ENCODE measurements at regions of chr3 and their contacts with region 1.

Region 1: GRCh38 chr3:25493786-25494185 is 65.7 kb downstream of the RARB start:
- DNase-seq: no peak
- H3K4me3 ChIP-seq: no peak overlapping the region
- H3K27ac ChIP-seq: no peak overlapping the region
- H3K4me1 ChIP-seq: no peaks in the 10 kb centered on the region
- H3K27me3 ChIP-seq: no peaks in the 10 kb centered on the region
- CTCF ChIP-seq: no peak
- POLR2A ChIP-seq: no peak

Region 2: GRCh38 chr3:24343084-24343783 is 1150.6 kb before region 1 on chr3:
- intact Hi-C with region 1: no loop called
- DNase-seq: no peak
- H3K4me3 ChIP-seq: no peak overlapping the region
- H3K27ac ChIP-seq: no peak overlapping the region
- H3K4me1 ChIP-seq: peaks cover 3 to 6% of the 10 kb centered on the region in 2 donors
- H3K27me3 ChIP-seq: no peaks in the 10 kb centered on the region
- CTCF ChIP-seq: no peak
- POLR2A ChIP-seq: no peak

Region 3: GRCh38 chr3:25531971-25532370 is 38.2 kb after region 1 on chr3:
- intact Hi-C with region 1: loop called (anchors 2 kb)
- DNase-seq: no peak
- H3K4me3 ChIP-seq: no peak overlapping the region
- H3K27ac ChIP-seq: no peak overlapping the region
- H3K4me1 ChIP-seq: no peaks in the 10 kb centered on the region
- H3K27me3 ChIP-seq: no peaks in the 10 kb centered on the region
- CTCF ChIP-seq: no peak
- POLR2A ChIP-seq: no peak